Dorsolateral prefrontal cortex (tissue), 120 donors: ENCODE measurements at regions of chr18 and their contacts with region 1.

Region 1: DNA sequence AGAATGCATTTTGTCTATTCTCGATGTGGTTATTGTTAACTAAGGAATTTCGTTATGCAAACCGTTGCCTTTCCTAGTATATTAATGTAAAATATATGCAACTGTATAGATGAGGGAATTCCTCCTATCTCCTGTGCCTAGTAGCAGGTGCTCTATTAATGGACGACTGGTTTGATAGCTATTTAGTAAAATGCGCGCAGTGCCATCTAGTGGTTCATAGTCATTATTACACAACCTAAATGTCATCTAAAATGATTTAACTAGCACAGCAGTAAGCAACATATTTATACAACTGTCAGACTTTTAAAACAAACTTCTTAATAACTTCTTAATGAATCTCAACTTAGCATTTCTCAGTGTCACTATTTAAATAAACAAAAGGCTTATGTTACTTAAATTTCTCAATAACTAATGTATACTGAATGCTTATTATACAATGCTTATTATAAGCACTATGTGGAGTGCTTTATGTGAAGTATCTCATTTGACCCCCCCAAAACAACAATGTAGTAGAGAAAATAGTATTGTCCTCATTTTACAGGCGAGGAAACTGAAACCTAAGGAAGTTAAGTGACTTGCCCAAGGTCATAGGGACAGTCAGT is 77.9 kb downstream of the DTNA start:
- DNase-seq: peak in 2 of 10 donors; percentile 48 to 60
- H3K4me3 ChIP-seq: no peak overlapping the region
- H3K27ac ChIP-seq: peak overlapping the region in 5 of 59 donors; percentile 0 to 36 (median 9)
- H3K27me3 ChIP-seq: no peaks in the 10 kb centered on the region
- CTCF ChIP-seq: peak; percentile 72 to 96 (median 84)

Region 2: GRCh38 chr18:34352385-34353163 is 435.5 kb before region 1 on chr18:
- intact Hi-C with region 1: loop called in 1 of 2 experiments (anchors 5 kb)
- DNase-seq: no peak
- H3K4me3 ChIP-seq: no peak overlapping the region
- H3K27ac ChIP-seq: peak overlapping the region in 1 of 59 donors; percentile 7
- H3K27me3 ChIP-seq: no peaks in the 10 kb centered on the region
- CTCF ChIP-seq: peak in 50 of 56 donors; percentile 12 to 63 (median 40)

Region 3: DNA sequence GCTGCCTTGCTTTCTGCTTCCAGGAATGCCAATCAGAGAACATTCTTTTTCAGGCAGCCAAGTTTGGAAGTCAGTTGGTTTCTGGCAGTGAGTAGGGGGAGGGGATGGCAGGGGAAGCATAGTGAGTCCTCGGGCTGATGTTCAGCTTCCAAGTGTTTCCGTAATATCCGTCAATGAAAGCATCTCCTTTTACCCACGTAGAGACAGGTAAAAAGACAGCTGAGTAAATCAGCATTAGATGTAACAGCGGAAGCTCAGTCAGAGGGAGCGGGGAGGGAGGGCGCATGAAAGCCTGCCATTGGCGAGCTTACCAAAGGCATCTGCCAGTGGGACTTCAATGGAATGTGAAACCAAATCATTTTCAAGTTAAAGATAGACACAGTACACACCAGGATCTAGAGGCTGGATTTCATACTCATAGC is 195.1 kb before region 1 on chr18:
- intact Hi-C with region 1: loop called in 1 of 2 experiments (anchors 5 kb)
- DNase-seq: peak in 9 of 10 donors; percentile 54 to 80 (median 69)
- H3K4me3 ChIP-seq: peak overlapping the region; percentile 15 to 69 (median 49)
- H3K27ac ChIP-seq: peak overlapping the region in 50 of 59 donors; percentile 8 to 84 (median 64)
- H3K27me3 ChIP-seq: no peaks in the 10 kb centered on the region
- CTCF ChIP-seq: no peak

Region 4: GRCh38 chr18:34661464-34662111 is 126.4 kb before region 1 on chr18:
- intact Hi-C with region 1: loop called (anchors 5 to 10 kb)
- DNase-seq: no peak
- H3K4me3 ChIP-seq: no peak overlapping the region
- H3K27ac ChIP-seq: peak overlapping the region in 42 of 59 donors; percentile 1 to 87 (median 69)
- H3K27me3 ChIP-seq: no peaks in the 10 kb centered on the region
- CTCF ChIP-seq: peak; percentile 65 to 88 (median 80)